Naive thymus-derived CD4-positive, alpha-beta T cell (primary cell): ENCODE measurements at regions of chr3 and their contacts with region 1.

Region 1: GRCh38 chr3:129249276-129250065 is at the start of gene COPG1:
- DNase-seq: peak; percentile 78 to 93 (median 89)
- ATAC-seq: peak; percentile 91
- H3K4me3 ChIP-seq: peak within 1 kb of the TSS; percentile 73
- H3K4me3 Mint-ChIP-seq: peak within 1 kb of the TSS; percentile 89 to 99 (median 95)
- H3K27ac ChIP-seq: peak within 1 kb of the TSS; percentile 98
- H3K27ac Mint-ChIP-seq: peak within 1 kb of the TSS; percentile 91 to 99 (median 96)
- H3K4me1 ChIP-seq: peaks cover 21 to 22% of the 10 kb centered on the region in 2 donors
- H3K4me1 Mint-ChIP-seq: peaks cover 29 to 65% (median 53%) of the 10 kb centered on the region in 7 donors
- H3K27me3 ChIP-seq: no peaks in the 10 kb centered on the region
- H3K27me3 Mint-ChIP-seq: peaks cover 0 to 4% (median 0%) of the 10 kb centered on the region in 5 donors
- total RNA-seq, gene COPG1: 83.3 to 177 (median 103) TPM

Region 2: DNA sequence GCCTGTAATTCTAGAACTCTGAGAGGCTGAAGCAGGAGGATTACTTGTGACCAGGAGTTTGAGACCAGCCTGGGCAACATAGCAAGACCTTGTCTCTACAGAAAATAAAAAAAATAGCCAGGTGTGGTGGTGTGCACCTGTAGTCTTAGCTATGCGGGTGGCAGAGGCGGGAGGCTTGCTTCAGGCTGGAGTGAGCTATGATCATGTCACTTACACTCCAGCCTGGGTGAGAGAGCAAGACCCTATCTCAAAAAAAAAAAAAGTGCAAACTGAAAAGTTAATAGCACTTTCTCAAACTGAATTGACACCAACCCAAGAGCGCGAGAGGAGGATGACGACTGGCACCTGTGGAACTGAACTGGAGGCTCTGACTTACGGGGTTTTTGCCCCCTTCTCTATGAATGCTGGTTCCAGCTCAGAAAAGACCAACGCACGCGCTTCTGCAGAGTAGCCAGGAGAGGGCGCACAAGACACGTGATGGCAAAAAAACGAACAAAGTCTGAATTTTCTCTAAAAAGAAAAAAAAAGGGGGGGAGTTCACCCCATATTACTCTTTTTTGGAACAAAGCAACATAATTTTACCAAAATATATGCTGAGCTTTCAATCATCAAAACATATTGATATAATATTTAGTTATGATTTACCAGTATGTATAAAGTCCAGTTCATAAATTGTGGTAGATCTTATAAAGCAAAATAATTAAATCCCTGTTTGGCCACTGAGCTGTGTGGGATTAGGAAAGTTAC is 279.3 kb before region 1 on chr3:
- CTCF ChIA-PET with region 1: interaction called, 127 read pairs
- POLR2A ChIA-PET with region 1: interaction called, 17 read pairs
- intact Hi-C with region 1: loop called (anchors 1 kb)
- DNase-seq: peak; percentile 43 to 75 (median 64)
- ATAC-seq: peak; percentile 89
- H3K4me3 ChIP-seq: no peak overlapping the region
- H3K4me3 Mint-ChIP-seq: peak overlapping the region in 1 of 10 donors; percentile 11
- H3K27ac ChIP-seq: no peak overlapping the region
- H3K27ac Mint-ChIP-seq: no peak overlapping the region
- H3K4me1 ChIP-seq: no peaks in the 10 kb centered on the region
- H3K4me1 Mint-ChIP-seq: peaks cover 0 to 7% (median 6%) of the 10 kb centered on the region in 7 donors
- H3K27me3 ChIP-seq: no peaks in the 10 kb centered on the region
- H3K27me3 Mint-ChIP-seq: peaks cover 0 to 5% (median 0%) of the 10 kb centered on the region in 5 donors

Region 3: GRCh38 chr3:129016356-129016719 is 233.1 kb before region 1 on chr3:
- CTCF ChIA-PET with region 1: interaction called, 14 read pairs
- POLR2A ChIA-PET with region 1: interaction called, 13 read pairs
- intact Hi-C with region 1: loop called in 1 of 2 experiments (anchors 1 kb)
- DNase-seq: peak in 7 of 9 donors; percentile 54 to 71 (median 65)
- ATAC-seq: peak; percentile 85
- H3K4me3 ChIP-seq: peak overlapping the region; percentile 41
- H3K4me3 Mint-ChIP-seq: peak overlapping the region; percentile 68 to 87 (median 84)
- H3K27ac ChIP-seq: peak overlapping the region; percentile 75
- H3K27ac Mint-ChIP-seq: peak overlapping the region; percentile 90 to 100 (median 97)
- H3K4me1 ChIP-seq: peaks cover 26 to 33% of the 10 kb centered on the region in 2 donors
- H3K4me1 Mint-ChIP-seq: peaks cover 31 to 66% (median 48%) of the 10 kb centered on the region in 7 donors
- H3K27me3 ChIP-seq: no peaks in the 10 kb centered on the region
- H3K27me3 Mint-ChIP-seq: no peaks in the 10 kb centered on the region

Region 4: GRCh38 chr3:129052675-129053074 is 196.8 kb before region 1 on chr3:
- CTCF ChIA-PET with region 1: interaction called, 76 read pairs
- POLR2A ChIA-PET with region 1: interaction called, 10 read pairs
- intact Hi-C with region 1: loop called (anchors 1 kb)
- DNase-seq: no peak
- ATAC-seq: no peak
- H3K4me3 ChIP-seq: no peak overlapping the region
- H3K4me3 Mint-ChIP-seq: no peak overlapping the region
- H3K27ac ChIP-seq: no peak overlapping the region
- H3K27ac Mint-ChIP-seq: peak overlapping the region in 3 of 9 donors; percentile 38 to 69 (median 38)
- H3K4me1 ChIP-seq: no peaks in the 10 kb centered on the region
- H3K4me1 Mint-ChIP-seq: peaks cover 3 to 20% (median 9%) of the 10 kb centered on the region in 7 donors
- H3K27me3 ChIP-seq: no peaks in the 10 kb centered on the region
- H3K27me3 Mint-ChIP-seq: peaks cover 0 to 14% (median 0%) of the 10 kb centered on the region in 5 donors

Region 5: GRCh38 chr3:129183569-129184395 is 65.7 kb before region 1 on chr3 and contains the start of gene CNBP:
- CTCF ChIA-PET with region 1: interaction called, 3 read pairs
- POLR2A ChIA-PET with region 1: interaction called, 9 read pairs
- intact Hi-C with region 1: loop called (anchors 1 kb)
- DNase-seq: peak; percentile 90 to 96 (median 94)
- ATAC-seq: peak; percentile 100
- H3K4me3 ChIP-seq: peak within 1 kb of the TSS; percentile 74
- H3K4me3 Mint-ChIP-seq: peak within 1 kb of the TSS; percentile 93 to 99 (median 96)
- H3K27ac ChIP-seq: peak within 1 kb of the TSS; percentile 100
- H3K27ac Mint-ChIP-seq: peak within 1 kb of the TSS; percentile 91 to 99 (median 97)
- H3K4me1 ChIP-seq: peaks cover 18 to 27% of the 10 kb centered on the region in 2 donors
- H3K4me1 Mint-ChIP-seq: peaks cover 32 to 48% (median 42%) of the 10 kb centered on the region in 7 donors
- H3K27me3 ChIP-seq: no peaks in the 10 kb centered on the region
- H3K27me3 Mint-ChIP-seq: no peaks in the 10 kb centered on the region
- total RNA-seq, gene CNBP: 259 to 366 (median 327) TPM

Region 6: DNA sequence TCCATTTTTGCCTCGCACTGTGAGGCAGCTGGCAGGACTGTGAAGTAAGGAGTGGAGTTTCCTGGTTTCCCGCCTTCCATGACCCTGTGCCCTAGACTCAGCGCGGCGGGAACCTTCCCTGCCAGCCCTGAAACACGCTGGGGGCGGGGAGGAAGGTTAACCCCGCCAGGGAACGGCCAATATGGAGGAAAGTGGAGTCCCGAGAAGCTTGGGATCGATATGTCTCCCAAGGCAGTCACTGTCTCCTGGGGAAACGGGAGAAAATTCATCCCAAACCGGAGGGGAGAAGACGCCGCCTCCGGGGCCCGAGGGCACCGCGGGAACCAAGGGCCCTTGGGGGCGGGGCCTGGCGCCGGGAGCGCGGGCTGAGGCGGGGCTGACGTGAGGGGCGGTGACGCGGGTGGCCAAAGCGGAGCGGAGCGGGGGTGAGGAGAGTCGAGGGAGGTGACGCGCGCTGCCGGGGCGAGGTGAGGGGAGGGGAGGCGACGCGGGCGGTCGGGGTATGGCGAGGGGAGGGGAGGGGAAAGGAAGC is 29.0 kb after region 1 on chr3 and contains the start of gene HMCES:
- CTCF ChIA-PET with region 1: interaction called, 4 read pairs
- POLR2A ChIA-PET with region 1: interaction called, 15 read pairs
- intact Hi-C with region 1: loop called (anchors 1 kb)
- DNase-seq: peak; percentile 92 to 98 (median 95)
- ATAC-seq: peak; percentile 98
- H3K4me3 ChIP-seq: peak within 1 kb of the TSS; percentile 99
- H3K4me3 Mint-ChIP-seq: peak within 1 kb of the TSS; percentile 95 to 99 (median 98)
- H3K27ac ChIP-seq: peak within 1 kb of the TSS; percentile 99
- H3K27ac Mint-ChIP-seq: peak within 1 kb of the TSS; percentile 89 to 100 (median 98)
- H3K4me1 ChIP-seq: peaks cover 14 to 29% of the 10 kb centered on the region in 2 donors
- H3K4me1 Mint-ChIP-seq: peaks cover 21 to 50% (median 37%) of the 10 kb centered on the region in 7 donors
- H3K27me3 ChIP-seq: no peaks in the 10 kb centered on the region
- H3K27me3 Mint-ChIP-seq: no peaks in the 10 kb centered on the region
- total RNA-seq, gene HMCES: 45.7 to 56.4 (median 52.5) TPM

Region 7: DNA sequence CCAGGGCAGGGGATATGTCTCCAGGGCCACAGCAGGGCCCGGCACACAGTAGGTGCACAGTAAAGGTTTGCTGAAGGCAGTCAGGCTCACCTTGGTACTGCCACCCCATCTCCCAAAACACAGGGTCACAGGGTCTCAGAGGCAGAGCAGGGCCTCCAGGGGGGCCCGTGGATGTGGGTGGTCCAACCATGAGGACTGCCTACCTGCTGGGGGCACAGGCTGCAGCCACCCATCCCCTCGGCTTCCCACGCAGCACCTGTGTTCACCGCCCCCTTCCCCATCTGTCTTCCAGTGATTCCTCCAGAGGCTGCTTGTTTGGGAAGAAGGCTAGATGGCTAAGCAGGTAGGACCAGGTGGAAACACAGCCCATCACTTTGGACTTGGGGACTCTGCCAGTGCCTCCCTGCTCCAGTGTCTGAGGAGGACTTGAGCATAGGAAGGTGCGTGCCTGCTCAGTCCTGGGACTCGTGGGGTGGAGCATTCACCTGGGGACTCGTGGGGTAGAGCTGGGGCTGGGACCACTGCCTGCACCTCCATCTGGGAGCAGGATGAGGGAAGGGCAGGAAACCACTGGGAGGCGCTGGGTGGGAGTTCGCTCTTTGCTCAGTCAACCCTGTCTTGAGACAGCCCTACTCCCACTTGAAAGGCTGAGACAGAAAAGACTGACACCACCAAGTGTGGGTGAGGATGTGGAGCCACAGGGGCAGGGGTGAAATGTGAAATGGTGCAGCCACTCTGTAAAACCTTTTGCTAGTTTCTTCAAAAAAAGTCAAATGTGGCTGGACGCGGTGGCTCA is 375.8 kb after region 1 on chr3:
- CTCF ChIA-PET with region 1: no interaction called
- POLR2A ChIA-PET with region 1: no interaction called
- intact Hi-C with region 1: no loop called
- DNase-seq: no peak
- ATAC-seq: no peak
- H3K4me3 ChIP-seq: no peak overlapping the region
- H3K4me3 Mint-ChIP-seq: peak overlapping the region in 9 of 10 donors; percentile 13 to 91 (median 40)
- H3K27ac ChIP-seq: no peak overlapping the region
- H3K27ac Mint-ChIP-seq: peak overlapping the region in 1 of 9 donors; percentile 45
- H3K4me1 ChIP-seq: peaks cover 5 to 9% of the 10 kb centered on the region in 2 donors
- H3K4me1 Mint-ChIP-seq: peaks cover 5 to 25% (median 17%) of the 10 kb centered on the region in 7 donors
- H3K27me3 ChIP-seq: no peaks in the 10 kb centered on the region
- H3K27me3 Mint-ChIP-seq: peaks cover 0 to 2% (median 0%) of the 10 kb centered on the region in 5 donors

Region 8: DNA sequence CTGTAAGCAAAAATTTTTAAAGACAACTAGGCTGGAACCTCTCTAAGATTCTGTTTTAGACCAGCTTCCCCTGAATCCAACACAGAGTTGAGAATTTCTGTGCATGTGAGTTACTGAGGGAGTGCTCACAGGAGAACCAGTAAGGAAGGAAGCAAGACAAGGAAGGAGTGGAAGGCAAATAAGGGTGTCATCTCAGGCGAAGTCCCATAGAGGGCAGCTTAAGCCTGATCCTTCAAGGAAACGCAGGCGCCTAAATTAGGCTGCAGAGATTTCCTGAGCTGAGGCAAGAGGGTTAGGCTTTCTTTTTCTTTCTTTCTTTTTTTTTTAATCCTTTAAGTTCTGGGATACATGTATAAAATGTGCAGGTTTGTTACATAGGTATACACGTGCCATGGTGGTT is 1231.3 kb after region 1 on chr3:
- CTCF ChIA-PET with region 1: no interaction called
- POLR2A ChIA-PET with region 1: no interaction called
- intact Hi-C with region 1: no loop called
- DNase-seq: no peak
- ATAC-seq: no peak
- H3K4me3 ChIP-seq: no peak overlapping the region
- H3K4me3 Mint-ChIP-seq: no peak overlapping the region
- H3K27ac ChIP-seq: no peak overlapping the region
- H3K27ac Mint-ChIP-seq: no peak overlapping the region
- H3K4me1 ChIP-seq: no peaks in the 10 kb centered on the region
- H3K4me1 Mint-ChIP-seq: no peaks in the 10 kb centered on the region
- H3K27me3 ChIP-seq: no peaks in the 10 kb centered on the region
- H3K27me3 Mint-ChIP-seq: peaks cover 0 to 13% (median 5%) of the 10 kb centered on the region in 5 donors